Calu3 (cell line): ENCODE measurements at regions of chr1 and their contacts with region 1.

Region 1: GRCh38 chr1:88111806-88112205 is 572.3 kb upstream of the PKN2 start:
- DNase-seq: peak; percentile 50
- H3K4me3 Mint-ChIP-seq: peak overlapping the region; percentile 12
- H3K27ac Mint-ChIP-seq: peak overlapping the region; percentile 59
- H3K4me1 Mint-ChIP-seq: peaks cover 42% of the 10 kb centered on the region
- H3K27me3 Mint-ChIP-seq: no peaks in the 10 kb centered on the region
- CTCF ChIP-seq: no peak

Region 2: GRCh38 chr1:88150330-88150729 is 38.5 kb after region 1 on chr1:
- CTCF ChIA-PET with region 1: interaction called, 6 read pairs
- intact Hi-C with region 1: loop called (anchors 5 kb)
- DNase-seq: no peak
- H3K4me3 Mint-ChIP-seq: peak overlapping the region; percentile 26
- H3K27ac Mint-ChIP-seq: peak overlapping the region; percentile 77
- H3K4me1 Mint-ChIP-seq: peaks cover 30% of the 10 kb centered on the region
- H3K27me3 Mint-ChIP-seq: no peaks in the 10 kb centered on the region
- CTCF ChIP-seq: no peak

Region 3: GRCh38 chr1:88252745-88253144 is 140.9 kb after region 1 on chr1:
- CTCF ChIA-PET with region 1: no interaction called
- intact Hi-C with region 1: no loop called
- DNase-seq: no peak
- H3K4me3 Mint-ChIP-seq: no peak overlapping the region
- H3K27ac Mint-ChIP-seq: no peak overlapping the region
- H3K4me1 Mint-ChIP-seq: no peaks in the 10 kb centered on the region
- H3K27me3 Mint-ChIP-seq: no peaks in the 10 kb centered on the region
- CTCF ChIP-seq: no peak